Naive thymus-derived CD4-positive, alpha-beta T cell (primary cell): ENCODE measurements at regions of chr14 and their contacts with region 1.

Region 1: DNA sequence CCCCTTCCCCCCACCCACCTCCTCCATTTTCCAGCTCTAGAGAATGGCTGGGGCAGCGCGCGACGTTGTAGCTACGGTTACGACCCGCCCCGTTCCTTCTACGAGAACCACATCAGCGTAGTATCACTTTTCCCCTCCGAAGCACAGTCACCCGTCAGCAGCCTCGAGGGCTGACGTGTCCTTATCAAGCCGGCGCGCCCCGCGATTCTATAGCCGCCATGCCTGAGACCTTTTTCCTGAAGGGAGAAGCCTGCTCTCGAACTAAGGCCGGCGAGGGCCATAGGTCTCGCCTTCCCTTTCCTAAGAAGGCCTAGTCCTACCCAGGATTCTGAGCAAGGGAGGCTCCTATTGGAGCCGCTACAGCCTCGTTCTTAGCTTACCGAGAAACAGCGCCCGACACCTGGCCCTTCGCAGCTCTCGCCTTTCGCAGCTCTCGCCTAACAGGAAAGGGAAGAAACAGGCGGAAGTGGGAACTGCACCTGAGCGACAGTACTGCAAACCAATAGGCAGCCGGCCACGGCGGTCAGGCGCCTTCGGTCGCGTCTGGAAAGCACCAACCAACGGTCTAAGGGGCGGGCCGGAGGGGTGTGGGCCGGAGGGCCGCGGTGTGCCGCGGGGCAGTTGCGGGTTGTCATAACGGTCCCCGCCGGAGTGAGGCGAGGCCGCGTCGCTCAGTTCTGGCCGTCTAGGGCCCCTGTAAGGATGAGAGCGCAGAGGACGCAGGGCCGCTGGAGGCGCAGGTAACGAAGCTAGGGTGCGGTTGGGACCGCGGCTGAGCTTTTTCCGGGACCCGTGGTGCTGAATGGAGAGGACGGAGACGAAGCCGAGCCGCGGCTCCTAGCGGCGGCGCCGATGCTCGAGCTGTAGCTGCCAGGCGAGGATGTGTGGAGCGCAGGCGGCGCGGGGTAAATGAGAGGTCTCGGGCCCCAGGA is at the starts of genes MGAT2 and RPL36AL:
- DNase-seq: peak; percentile 89 to 95 (median 94)
- ATAC-seq: peak; percentile 92
- H3K4me3 ChIP-seq: peak within 1 kb of the TSS; percentile 98
- H3K4me3 Mint-ChIP-seq: peak within 1 kb of the TSS; percentile 94 to 99 (median 98)
- H3K27ac ChIP-seq: peak within 1 kb of the TSS; percentile 97
- H3K27ac Mint-ChIP-seq: peak within 1 kb of the TSS; percentile 95 to 100 (median 99)
- H3K4me1 ChIP-seq: peaks cover 40 to 42% of the 10 kb centered on the region in 2 donors
- H3K4me1 Mint-ChIP-seq: peaks cover 36 to 75% (median 56%) of the 10 kb centered on the region in 7 donors
- H3K27me3 ChIP-seq: no peaks in the 10 kb centered on the region
- H3K27me3 Mint-ChIP-seq: no peaks in the 10 kb centered on the region
- total RNA-seq, gene MGAT2: 16.8 to 69.3 (median 35.1) TPM
- total RNA-seq, gene RPL36AL: 177 to 429 (median 281) TPM

Region 2: DNA sequence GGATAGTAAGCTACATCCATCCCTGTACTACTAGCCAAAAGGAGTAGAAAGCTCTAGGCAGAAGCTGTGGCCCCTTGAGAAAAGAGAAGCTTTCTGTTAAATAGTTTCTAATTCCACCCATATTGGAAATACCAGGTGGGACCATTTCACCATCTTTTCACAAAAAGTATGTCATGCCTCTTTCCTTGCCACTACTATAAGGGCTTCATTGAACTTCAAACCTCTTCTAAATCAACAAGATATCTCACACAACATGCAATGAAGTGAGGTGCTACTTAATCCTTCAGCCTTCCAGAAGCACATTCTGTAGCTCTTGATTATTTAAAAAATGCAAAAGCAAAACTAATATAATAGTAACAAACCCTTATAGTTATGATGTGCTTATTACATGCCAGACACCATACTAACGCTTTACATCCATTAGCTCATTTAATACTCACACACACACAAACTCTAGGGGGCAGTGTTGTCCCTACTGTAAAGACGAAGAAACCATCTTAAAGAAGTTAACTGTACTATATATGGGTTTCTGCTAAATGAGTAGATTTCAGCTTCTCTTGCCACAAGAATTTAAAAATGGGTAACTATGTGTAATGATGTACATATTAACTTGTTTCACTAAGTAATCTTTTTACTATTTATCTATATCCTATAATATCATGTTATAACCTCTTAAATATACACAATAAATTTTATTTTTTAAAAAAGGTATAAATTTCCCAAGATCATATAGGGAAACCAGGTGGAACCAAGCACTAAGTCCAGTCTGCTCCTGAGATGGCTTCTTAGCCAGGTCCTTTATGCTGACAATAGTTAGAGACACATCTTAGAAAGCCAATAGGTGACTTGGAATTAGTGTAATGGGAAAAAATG is 158.7 kb before region 1 on chr14:
- CTCF ChIA-PET with region 1: no interaction called
- POLR2A ChIA-PET with region 1: no interaction called
- intact Hi-C with region 1: loop called in 1 of 2 experiments (anchors 2 kb)
- DNase-seq: peak in 7 of 9 donors; percentile 43 to 74 (median 67)
- ATAC-seq: peak; percentile 95
- H3K4me3 ChIP-seq: no peak overlapping the region
- H3K4me3 Mint-ChIP-seq: no peak overlapping the region
- H3K27ac ChIP-seq: no peak overlapping the region
- H3K27ac Mint-ChIP-seq: no peak overlapping the region
- H3K4me1 ChIP-seq: no peaks in the 10 kb centered on the region
- H3K4me1 Mint-ChIP-seq: no peaks in the 10 kb centered on the region
- H3K27me3 ChIP-seq: no peaks in the 10 kb centered on the region
- H3K27me3 Mint-ChIP-seq: peaks cover 0 to 31% (median 6%) of the 10 kb centered on the region in 5 donors

Region 3: GRCh38 chr14:49598485-49599300 is 21.8 kb before region 1 on chr14 and contains the start of gene LRR1:
- CTCF ChIA-PET with region 1: interaction called, 10 read pairs
- POLR2A ChIA-PET with region 1: interaction called, 45 read pairs
- intact Hi-C with region 1: loop called (anchors 1 kb)
- DNase-seq: peak; percentile 74 to 91 (median 84)
- ATAC-seq: peak; percentile 93
- H3K4me3 ChIP-seq: peak within 1 kb of the TSS; percentile 94
- H3K4me3 Mint-ChIP-seq: peak within 1 kb of the TSS; percentile 91 to 100 (median 98)
- H3K27ac ChIP-seq: peak within 1 kb of the TSS; percentile 92
- H3K27ac Mint-ChIP-seq: peak within 1 kb of the TSS; percentile 95 to 99 (median 98)
- H3K4me1 ChIP-seq: peaks cover 0 to 5% of the 10 kb centered on the region in 2 donors
- H3K4me1 Mint-ChIP-seq: peaks cover 5 to 46% (median 37%) of the 10 kb centered on the region in 7 donors
- H3K27me3 ChIP-seq: no peaks in the 10 kb centered on the region
- H3K27me3 Mint-ChIP-seq: no peaks in the 10 kb centered on the region
- total RNA-seq, gene LRR1: 7.5 to 39.7 (median 13.3) TPM

Region 4: DNA sequence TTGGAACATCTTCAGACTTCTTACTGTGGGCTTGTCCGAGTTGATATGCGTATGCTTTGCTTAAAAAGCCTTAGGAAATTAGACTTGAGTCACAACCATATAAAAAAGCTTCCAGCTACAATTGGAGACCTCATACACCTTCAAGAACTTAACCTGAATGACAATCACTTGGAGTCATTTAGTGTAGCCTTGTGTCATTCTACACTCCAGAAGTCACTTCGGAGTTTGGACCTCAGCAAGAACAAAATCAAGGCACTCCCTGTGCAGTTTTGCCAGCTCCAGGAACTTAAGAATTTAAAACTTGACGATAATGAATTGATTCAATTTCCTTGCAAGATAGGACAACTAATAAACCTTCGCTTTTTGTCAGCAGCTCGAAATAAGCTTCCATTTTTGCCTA is 12.9 kb before region 1 on chr14:
- CTCF ChIA-PET with region 1: no interaction called
- POLR2A ChIA-PET with region 1: interaction called, 20 read pairs
- intact Hi-C with region 1: no loop called
- DNase-seq: no peak
- ATAC-seq: no peak
- H3K4me3 ChIP-seq: no peak overlapping the region
- H3K4me3 Mint-ChIP-seq: no peak overlapping the region
- H3K27ac ChIP-seq: no peak overlapping the region
- H3K27ac Mint-ChIP-seq: no peak overlapping the region
- H3K4me1 ChIP-seq: no peaks in the 10 kb centered on the region
- H3K4me1 Mint-ChIP-seq: peaks cover 0 to 28% (median 0%) of the 10 kb centered on the region in 7 donors
- H3K27me3 ChIP-seq: no peaks in the 10 kb centered on the region
- H3K27me3 Mint-ChIP-seq: no peaks in the 10 kb centered on the region

Region 5: DNA sequence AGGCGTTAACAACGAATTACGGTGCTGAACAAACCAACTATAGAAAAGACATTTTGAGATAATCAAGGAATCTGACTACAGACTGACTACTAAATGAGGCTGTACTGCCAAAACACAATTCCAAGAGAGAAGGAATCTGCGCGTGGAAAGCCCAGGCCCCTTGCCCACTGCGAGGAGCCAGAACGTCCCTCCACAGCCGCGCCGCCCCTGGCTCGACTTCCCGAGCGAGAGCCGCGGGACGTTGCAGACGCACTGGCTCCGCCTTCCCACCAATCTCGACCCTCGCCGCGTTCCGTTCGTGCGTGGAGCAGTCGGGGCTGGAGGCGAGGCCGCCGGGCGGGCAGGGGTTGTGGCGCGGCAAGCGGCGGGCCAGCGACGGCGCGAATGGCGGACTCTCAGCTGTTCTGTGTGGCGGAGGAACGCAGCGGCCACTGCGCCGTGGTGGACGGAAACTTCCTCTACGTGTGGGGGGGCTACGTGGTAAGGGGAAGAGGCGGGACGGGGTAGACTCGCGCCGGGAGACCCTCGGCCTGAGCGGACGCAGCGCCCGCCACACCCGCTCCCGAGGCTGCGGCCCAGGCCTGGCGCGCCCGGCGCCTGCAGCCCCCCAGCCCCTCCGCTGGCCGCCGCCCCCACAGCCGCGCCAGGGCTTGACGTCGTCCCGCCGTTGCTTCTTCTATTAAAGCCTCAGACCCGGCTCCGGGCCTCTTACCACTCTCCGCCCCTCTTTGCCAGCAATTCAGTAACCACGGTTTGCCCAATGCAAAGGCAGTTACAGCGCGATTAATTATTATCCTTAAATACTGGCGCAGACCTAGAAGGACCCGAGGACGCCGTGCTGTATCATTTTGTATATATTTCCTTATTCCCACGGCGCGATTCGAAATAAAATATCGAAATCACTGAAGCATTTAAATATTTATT is 72.6 kb after region 1 on chr14 and contains the start of gene KLHDC1:
- CTCF ChIA-PET with region 1: interaction called, 6 read pairs
- POLR2A ChIA-PET with region 1: interaction called, 11 read pairs
- intact Hi-C with region 1: loop called (anchors 1 to 2 kb)
- DNase-seq: peak; percentile 70 to 84 (median 80)
- ATAC-seq: peak; percentile 89
- H3K4me3 ChIP-seq: peak within 1 kb of the TSS; percentile 67
- H3K4me3 Mint-ChIP-seq: peak within 1 kb of the TSS; percentile 81 to 100 (median 89)
- H3K27ac ChIP-seq: peak within 1 kb of the TSS; percentile 80
- H3K27ac Mint-ChIP-seq: peak within 1 kb of the TSS; percentile 79 to 99 (median 94)
- H3K4me1 ChIP-seq: peaks cover 8 to 19% of the 10 kb centered on the region in 2 donors
- H3K4me1 Mint-ChIP-seq: peaks cover 20 to 52% (median 43%) of the 10 kb centered on the region in 7 donors
- H3K27me3 ChIP-seq: no peaks in the 10 kb centered on the region
- H3K27me3 Mint-ChIP-seq: no peaks in the 10 kb centered on the region
- total RNA-seq, gene KLHDC1: 2.6 to 18.0 (median 12.2) TPM